ENCODE measurements at regions of chr1 and their contacts with region 1.

Region 1: DNA sequence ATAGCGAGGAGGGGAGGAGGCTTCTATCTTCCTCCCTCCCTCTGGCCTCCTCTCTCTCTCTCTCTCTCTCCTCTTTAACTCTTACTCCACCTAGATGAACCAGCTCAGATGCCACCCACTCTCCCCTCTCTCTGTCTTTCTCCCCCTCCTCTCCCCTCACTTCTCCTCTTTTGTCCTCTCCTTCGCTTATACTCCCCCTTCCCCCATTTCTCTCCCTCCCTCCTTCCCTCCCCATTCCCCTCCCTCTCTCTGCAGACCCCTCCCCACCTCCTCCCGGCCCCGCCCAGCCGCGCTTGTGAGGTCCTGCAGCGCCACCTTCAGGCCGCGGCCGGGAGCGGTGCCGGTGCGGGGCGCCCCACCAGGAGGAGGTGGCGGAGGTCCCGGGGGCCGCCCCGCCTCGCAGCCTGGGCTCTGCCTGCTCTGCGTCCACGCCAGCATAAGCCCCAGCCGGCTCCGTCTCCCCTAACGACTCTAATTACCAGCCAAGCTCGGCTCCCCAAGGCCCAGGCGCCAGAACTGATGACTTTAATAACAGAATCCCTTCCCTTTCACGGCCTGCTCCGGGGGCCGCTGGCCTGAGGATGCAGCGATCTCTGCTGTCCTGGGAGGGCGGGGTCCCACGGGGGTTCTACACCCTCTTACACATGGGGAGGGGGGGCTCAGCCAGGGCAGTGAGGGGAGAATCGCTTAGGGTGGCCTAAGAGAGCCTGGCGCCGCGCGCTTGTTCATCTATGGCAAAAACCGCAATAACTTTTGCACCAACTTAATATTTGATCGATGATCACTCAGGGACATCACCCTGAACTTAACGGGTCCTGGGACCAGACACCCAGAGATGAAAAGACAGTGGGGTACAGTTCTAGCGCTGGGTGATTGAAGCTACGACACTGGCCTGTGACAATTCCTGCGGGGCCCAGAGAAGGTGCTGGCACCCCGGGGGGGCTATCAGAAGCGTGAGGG is 637.3 kb downstream of the MATN1 start:
- ATAC-seq: peak; percentile 41 to 95 (median 90)
- H3K4me3 ChIP-seq: no peak overlapping the region
- H3K27ac ChIP-seq: peak overlapping the region in 1 of 2 donors; percentile 32
- H3K4me1 ChIP-seq: peaks cover 0 to 31% of the 10 kb centered on the region in 2 donors

Region 2: GRCh38 chr1:29513357-29513756 is 572.7 kb before region 1 on chr1:
- in situ Hi-C with region 1: loop called in 1 of 9 experiments (anchors 25 kb)
- ATAC-seq: peak; percentile 97 to 100 (median 100)
- H3K4me3 ChIP-seq: no peak overlapping the region
- H3K27ac ChIP-seq: no peak overlapping the region
- H3K4me1 ChIP-seq: peaks cover 0 to 4% of the 10 kb centered on the region in 2 donors

Region 3: DNA sequence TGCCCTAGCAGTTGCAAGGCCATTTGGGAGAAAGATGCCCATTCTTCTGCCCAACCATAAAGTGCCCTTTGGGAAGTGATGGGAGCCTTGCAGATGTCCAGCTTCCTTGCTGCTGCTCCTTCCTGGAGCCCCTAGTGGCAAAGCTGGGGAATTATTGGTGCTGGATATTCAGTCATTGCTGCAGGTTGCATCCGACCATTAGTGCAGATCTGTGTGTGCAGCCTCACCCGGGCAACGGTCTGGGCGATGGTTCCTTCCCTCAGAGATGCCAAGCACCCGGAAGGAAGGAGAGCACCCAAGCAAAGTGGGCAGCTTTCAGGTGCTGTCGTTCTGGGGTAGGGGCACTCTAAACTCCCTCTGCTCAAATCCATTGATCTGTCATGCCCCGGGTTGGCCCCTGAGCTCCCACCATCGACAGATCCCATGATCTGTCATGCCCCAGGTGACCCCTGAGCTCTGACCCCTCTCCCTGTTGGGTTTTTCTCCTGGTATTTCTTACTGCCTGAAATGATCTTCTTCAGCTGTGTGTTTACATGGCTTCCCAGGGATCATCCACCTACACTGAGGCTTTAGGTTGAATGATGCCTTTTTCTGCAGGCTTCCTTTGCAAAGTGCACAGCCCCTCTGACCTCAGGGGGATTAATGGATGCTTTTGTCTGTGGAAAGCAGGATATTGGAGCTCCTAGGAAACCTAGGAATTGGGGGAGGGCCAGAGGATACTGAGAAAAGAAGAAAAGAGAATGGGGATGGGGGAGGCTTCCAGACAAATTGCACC is 382.3 kb before region 1 on chr1:
- in situ Hi-C with region 1: loop called in 1 of 9 experiments (anchors 25 kb)
- ATAC-seq: peak; percentile 51 to 84 (median 66)
- H3K4me3 ChIP-seq: no peak overlapping the region
- H3K27ac ChIP-seq: peak overlapping the region in 1 of 2 donors; percentile 55
- H3K4me1 ChIP-seq: peaks cover 7 to 25% of the 10 kb centered on the region in 2 donors

Region 4: DNA sequence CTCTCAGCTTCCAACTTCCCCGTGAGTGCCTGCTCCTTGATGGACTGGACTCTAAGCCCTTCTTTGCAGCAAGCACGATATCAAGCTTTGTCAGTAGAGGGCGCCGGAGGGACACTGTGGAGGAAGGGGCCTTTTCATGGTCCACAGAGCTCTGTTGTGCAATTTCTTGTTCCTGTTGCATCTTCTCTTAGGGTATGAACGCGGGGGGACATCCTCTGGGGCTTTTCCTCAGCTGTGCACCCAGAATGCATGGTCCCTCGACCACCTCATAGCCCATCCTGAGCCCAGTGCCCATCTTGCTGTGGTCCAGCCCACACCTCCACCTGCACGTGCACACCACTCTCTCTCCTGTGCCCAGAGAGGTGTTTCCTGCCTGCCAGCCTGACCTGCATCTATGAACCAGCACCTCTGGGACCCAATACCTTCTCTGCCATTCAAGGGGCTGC is 293.0 kb before region 1 on chr1:
- in situ Hi-C with region 1: loop called in 5 of 9 experiments (anchors 10 to 25 kb)
- ATAC-seq: peak; percentile 93 to 99 (median 97)
- H3K4me3 ChIP-seq: no peak overlapping the region
- H3K27ac ChIP-seq: peak overlapping the region in 1 of 2 donors; percentile 44
- H3K4me1 ChIP-seq: peaks cover 0 to 8% of the 10 kb centered on the region in 2 donors

Region 5: DNA sequence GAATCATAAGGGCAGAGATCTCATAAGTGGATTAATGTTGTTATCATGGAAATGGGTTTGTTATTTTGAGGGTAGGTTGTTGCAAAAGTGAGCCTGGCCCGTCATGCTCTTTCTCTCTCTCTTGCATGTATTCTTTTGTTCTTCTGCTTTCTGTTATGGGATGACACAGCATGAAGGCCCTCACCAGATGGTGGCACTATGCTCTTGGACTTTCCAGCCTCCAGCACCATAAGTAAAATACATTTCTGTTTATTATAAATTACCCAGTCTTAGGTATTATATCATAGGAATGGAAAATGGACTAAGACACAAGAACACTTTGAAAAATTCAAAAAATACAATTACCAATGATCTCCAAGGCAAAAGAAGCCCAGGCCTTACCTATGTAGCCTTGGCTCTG is 173.7 kb before region 1 on chr1:
- in situ Hi-C with region 1: loop called in 1 of 9 experiments (anchors 25 kb)
- ATAC-seq: peak in 2 of 8 experiments; percentile 47 to 62
- H3K4me3 ChIP-seq: no peak overlapping the region
- H3K27ac ChIP-seq: no peak overlapping the region
- H3K4me1 ChIP-seq: peaks cover 0 to 17% of the 10 kb centered on the region in 2 donors

Measured in motor neuron (in vitro differentiated cells).